PC-9 (cell line): ENCODE measurements at regions of chr1 and their contacts with region 1.

Region 1: DNA sequence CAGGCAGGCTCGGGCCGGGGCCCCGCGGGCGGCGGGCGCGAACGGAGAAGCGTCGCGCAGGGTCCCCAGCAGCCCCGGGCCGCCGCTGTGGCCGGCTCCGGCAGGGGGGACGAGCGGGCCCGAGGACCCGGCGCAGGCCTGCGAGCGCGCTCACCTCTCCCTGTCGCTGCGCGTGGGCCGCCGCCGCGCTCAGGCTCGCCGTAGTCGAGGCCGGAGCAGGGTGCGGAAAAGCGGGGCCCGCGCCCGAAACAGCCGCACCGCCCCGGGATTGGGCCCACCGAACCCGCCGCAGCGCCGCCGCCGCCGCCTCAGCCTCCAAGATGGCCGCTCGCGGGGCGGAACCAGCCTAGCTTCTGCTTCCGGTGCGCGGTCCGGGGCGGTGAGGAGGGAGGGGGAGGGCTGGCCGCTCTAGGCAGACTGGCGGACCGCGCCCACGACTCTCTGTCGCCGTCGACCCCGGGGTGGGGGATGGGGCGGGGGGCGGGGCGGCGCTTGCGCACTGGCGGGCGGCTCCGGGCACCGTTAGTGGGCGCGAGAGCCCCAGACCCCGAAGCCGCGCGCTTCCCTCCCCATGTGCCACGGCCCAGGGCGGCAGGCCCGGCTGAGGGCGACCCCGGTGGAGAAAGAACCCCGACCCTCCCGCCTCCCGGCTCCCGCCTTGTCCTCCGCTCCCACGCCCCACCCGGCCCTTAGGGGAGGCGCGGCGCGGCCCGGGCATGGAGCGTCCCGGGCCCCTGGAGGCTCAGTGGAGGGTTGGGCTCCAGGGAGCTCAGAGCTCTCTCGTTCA is at the start of gene UBE2J2:
- DNase-seq: peak; percentile 73 to 85
- H3K4me3 ChIP-seq: peak within 1 kb of the TSS; percentile 70
- H3K27ac ChIP-seq: peak within 1 kb of the TSS; percentile 42
- H3K4me1 ChIP-seq: peaks cover 17% of the 10 kb centered on the region
- H3K27me3 ChIP-seq: no peaks in the 10 kb centered on the region
- CTCF ChIP-seq: no peak
- total RNA-seq, gene UBE2J2: 54.2 and 55.0 TPM in 2 replicates

Region 2: DNA sequence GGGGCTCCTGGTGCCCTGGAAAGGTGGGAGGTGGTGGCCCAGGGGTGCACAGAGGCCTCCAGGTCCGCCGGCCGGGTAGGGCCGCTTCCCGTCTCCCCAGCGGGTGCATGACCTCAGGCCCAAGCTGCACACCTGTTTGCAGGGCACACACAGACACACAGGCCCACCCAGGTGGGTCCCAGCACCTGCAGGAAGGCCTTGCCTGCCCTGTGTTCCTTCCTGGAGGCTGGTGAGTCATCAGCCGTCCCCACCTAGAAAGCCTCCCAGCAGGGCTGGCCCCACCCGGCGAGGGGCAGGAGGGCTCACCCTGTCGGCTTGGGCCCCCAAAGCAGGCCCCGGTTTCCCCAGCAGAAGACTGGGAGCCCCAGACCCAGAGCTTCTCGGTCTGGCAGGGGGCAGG is 123.6 kb before region 1 on chr1:
- CTCF ChIA-PET with region 1: no interaction called
- POLR2A ChIA-PET with region 1: interaction called, 21 read pairs
- intact Hi-C with region 1: no loop called
- DNase-seq: peak; percentile 62 to 69
- H3K4me3 ChIP-seq: no peak overlapping the region
- H3K27ac ChIP-seq: no peak overlapping the region
- H3K4me1 ChIP-seq: peaks cover 9% of the 10 kb centered on the region
- H3K27me3 ChIP-seq: no peaks in the 10 kb centered on the region
- CTCF ChIP-seq: no peak

Region 3: DNA sequence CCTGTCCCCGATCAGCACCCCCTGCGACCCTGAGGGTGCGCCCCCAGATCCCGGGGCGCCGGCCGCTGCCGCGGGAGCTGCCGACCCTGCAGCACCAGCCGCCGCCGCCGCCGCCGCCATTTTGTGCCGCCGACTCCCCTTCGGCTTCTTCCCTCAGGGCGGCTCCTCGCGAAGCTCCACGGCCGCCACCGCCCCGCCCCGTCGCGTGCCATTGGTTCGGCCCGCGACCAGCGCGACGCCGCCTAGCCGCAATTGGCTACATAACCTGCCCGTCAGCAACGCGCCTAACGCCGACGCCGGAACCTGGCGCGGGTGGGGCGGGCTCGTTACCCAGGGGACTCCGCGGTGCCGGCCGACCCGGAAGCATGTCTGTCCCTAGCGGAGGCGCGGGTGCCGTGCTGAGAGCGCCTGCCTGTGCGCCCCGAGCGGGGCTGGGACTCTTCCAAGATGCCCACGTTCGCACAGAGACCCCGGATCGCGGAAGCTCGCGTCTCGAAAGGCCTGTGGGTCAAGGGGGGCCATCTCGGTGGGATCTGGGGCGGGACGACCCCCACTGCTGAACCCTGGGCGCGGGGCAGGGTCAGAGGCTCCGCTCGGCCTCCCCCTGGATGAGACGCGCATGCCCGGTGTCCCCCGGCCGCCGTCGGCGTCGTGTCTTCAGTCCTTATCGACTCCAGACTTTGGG is 125.6 kb after region 1 on chr1 and contains the start of gene CCNL2:
- CTCF ChIA-PET with region 1: no interaction called
- POLR2A ChIA-PET with region 1: no interaction called
- intact Hi-C with region 1: no loop called
- DNase-seq: peak; percentile 90 to 98
- H3K4me3 ChIP-seq: peak within 1 kb of the TSS; percentile 80
- H3K27ac ChIP-seq: peak within 1 kb of the TSS; percentile 36
- H3K4me1 ChIP-seq: peaks cover 25% of the 10 kb centered on the region
- H3K27me3 ChIP-seq: no peaks in the 10 kb centered on the region
- CTCF ChIP-seq: peak; percentile 33; the same call in 1 of the 2 replicates
- total RNA-seq, gene CCNL2: 162 and 183 TPM in 2 replicates

Region 4: GRCh38 chr1:1462318-1462966 is 188.7 kb after region 1 on chr1:
- CTCF ChIA-PET with region 1: no interaction called
- POLR2A ChIA-PET with region 1: no interaction called
- intact Hi-C with region 1: no loop called
- DNase-seq: peak in 1 of 2 experiments; percentile 76
- H3K4me3 ChIP-seq: no peak overlapping the region
- H3K27ac ChIP-seq: no peak overlapping the region
- H3K4me1 ChIP-seq: no peaks in the 10 kb centered on the region
- H3K27me3 ChIP-seq: no peaks in the 10 kb centered on the region
- CTCF ChIP-seq: no peak

Region 5: DNA sequence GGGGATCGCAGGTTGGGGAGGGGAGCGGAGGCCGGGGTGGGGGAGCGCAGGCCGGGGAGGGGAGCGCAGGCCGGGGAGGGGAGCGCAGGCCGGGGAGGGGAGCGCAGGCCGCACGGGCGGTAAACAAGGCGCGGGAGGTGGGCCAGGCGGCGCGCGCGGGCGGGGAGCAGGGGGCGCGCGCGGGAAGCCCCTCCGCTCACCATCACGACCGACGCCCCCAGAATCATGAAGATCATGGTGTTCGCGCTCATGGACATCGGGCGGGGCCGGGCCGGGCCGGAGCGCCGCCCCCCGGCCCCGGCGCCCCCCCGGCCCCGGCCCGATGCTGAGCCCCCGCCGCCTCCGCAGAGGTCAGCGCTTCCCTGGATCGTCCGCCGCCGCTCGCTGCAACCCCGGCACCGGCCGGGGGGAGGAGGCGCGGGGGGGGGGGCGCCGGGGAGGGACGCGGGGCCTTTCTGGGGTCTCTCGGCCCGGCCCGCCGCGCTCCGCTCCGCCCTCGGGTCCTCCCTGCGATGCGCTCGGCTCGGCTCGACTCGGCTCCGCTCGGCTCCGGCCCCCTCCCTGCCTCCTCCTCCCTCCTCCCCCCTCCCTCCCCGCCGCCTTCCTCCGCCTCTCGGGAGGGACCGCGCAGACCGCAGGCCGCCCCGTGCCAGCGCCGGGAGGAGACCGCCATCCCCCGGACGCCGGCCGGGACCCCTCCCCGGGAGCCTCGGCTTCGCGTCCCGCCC is 266.5 kb after region 1 on chr1 and contains the start of gene TMEM240:
- CTCF ChIA-PET with region 1: no interaction called
- POLR2A ChIA-PET with region 1: no interaction called
- intact Hi-C with region 1: no loop called
- DNase-seq: no peak
- H3K4me3 ChIP-seq: no peak within 1 kb of the TSS
- H3K27ac ChIP-seq: no peak within 1 kb of the TSS
- H3K4me1 ChIP-seq: no peaks in the 10 kb centered on the region
- H3K27me3 ChIP-seq: no peaks in the 10 kb centered on the region
- CTCF ChIP-seq: no peak
- total RNA-seq, gene TMEM240: 4.4 and 8.3 TPM in 2 replicates